Endothelial cell of umbilical vein (primary cell): ENCODE measurements at regions of chr11 and their contacts with region 1.

Region 1: GRCh38 chr11:64304316-64305072 is 830 bp upstream of the ESRRA start:
- DNase-seq: peak; percentile 85
- H3K4me3 ChIP-seq: peak overlapping the region; percentile 14 to 57 (median 39)
- H3K27ac ChIP-seq: peak overlapping the region; percentile 49
- H3K4me1 ChIP-seq: peaks cover 21% of the 10 kb centered on the region
- H3K27me3 ChIP-seq: peaks cover 4 to 11% of the 10 kb centered on the region in 2 experiments
- CTCF ChIP-seq: peak; percentile 91 to 92
- POLR2A ChIP-seq: peak; percentile 35

Region 2: GRCh38 chr11:63838678-63839507 is 465.6 kb before region 1 on chr11 and contains the start of gene MARK2:
- CTCF ChIA-PET with region 1: no interaction called
- POLR2A ChIA-PET with region 1: no interaction called
- dilution Hi-C with region 1: no loop called
- intact Hi-C with region 1: loop called (anchors 5 kb)
- DNase-seq: peak; percentile 96
- H3K4me3 ChIP-seq: peak within 1 kb of the TSS; percentile 70 to 87 (median 85)
- H3K27ac ChIP-seq: peak within 1 kb of the TSS; percentile 61
- H3K4me1 ChIP-seq: peaks cover 26% of the 10 kb centered on the region
- H3K27me3 ChIP-seq: no peaks in the 10 kb centered on the region
- CTCF ChIP-seq: no peak
- POLR2A ChIP-seq: peak; percentile 72
- total RNA-seq, gene MARK2: 33.4 and 34.7 TPM in 2 replicates

Region 3: GRCh38 chr11:64204464-64204989 is 100.0 kb before region 1 on chr11:
- CTCF ChIA-PET with region 1: interaction called, 413 read pairs
- POLR2A ChIA-PET with region 1: interaction called, 5 read pairs
- dilution Hi-C with region 1: no loop called
- intact Hi-C with region 1: loop called (anchors 1 kb)
- DNase-seq: peak; percentile 90
- H3K4me3 ChIP-seq: no peak overlapping the region
- H3K27ac ChIP-seq: no peak overlapping the region
- H3K4me1 ChIP-seq: peaks cover 34% of the 10 kb centered on the region
- H3K27me3 ChIP-seq: no peaks in the 10 kb centered on the region
- CTCF ChIP-seq: peak; percentile 82 to 84
- POLR2A ChIP-seq: peak; percentile 27

Region 4: GRCh38 chr11:64240394-64241174 is 63.9 kb before region 1 on chr11 and contains the start of gene FKBP2:
- CTCF ChIA-PET with region 1: interaction called, 36 read pairs
- POLR2A ChIA-PET with region 1: interaction called, 3 read pairs
- dilution Hi-C with region 1: no loop called
- intact Hi-C with region 1: loop called (anchors 1 kb)
- DNase-seq: peak; percentile 97
- H3K4me3 ChIP-seq: peak within 1 kb of the TSS; percentile 67 to 93 (median 67)
- H3K27ac ChIP-seq: peak within 1 kb of the TSS; percentile 88
- H3K4me1 ChIP-seq: peaks cover 15% of the 10 kb centered on the region
- H3K27me3 ChIP-seq: no peaks in the 10 kb centered on the region
- CTCF ChIP-seq: no peak
- POLR2A ChIP-seq: peak; percentile 1
- total RNA-seq, gene FKBP2: 48.4 and 48.5 TPM in 2 replicates

Region 5: GRCh38 chr11:64269380-64270234 is 34.9 kb before region 1 on chr11:
- CTCF ChIA-PET with region 1: interaction called, 76 read pairs
- POLR2A ChIA-PET with region 1: no interaction called
- dilution Hi-C with region 1: no loop called
- intact Hi-C with region 1: loop called (anchors 1 kb)
- DNase-seq: peak; percentile 100
- H3K4me3 ChIP-seq: peak overlapping the region; percentile 1 to 66 (median 58)
- H3K27ac ChIP-seq: peak overlapping the region; percentile 76
- H3K4me1 ChIP-seq: peaks cover 38% of the 10 kb centered on the region
- H3K27me3 ChIP-seq: no peaks in the 10 kb centered on the region
- CTCF ChIP-seq: no peak
- POLR2A ChIP-seq: peak; percentile 73

Region 6: DNA sequence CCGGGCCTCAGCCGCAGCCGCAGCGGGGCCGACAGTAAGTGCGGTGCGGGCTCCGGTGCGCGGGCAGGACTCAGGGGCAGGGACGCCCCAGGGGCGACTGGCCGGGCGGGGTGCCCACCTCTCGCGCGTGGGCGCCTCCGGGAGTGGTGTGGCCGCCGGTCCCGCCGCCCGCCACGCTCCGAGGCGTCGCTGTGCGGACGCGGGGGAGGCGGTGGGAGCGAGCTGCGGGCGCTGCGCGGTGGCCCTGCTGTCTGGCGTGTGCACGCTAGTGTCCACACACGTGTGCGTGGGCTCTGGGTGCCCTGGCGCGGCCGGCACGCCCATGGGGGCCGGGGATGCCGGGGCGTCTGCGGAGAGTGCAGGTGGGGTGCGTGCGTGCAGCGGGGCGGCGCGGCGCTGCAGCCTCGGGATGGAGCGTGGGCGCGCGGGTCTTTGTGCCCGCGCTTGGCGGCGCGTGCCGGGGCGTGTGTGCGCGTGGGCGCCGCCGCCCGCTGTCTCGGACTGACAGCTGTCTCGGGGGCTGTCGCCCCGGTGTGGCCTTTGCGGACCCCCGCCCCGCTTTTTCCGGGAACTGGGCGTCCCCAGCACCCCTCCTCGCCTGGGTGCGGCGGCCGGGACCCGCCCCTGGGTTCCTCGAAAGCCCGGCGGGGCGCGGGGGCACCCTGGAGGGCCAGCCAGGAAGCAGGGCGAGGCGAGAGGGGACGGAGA is 12.6 kb before region 1 on chr11:
- CTCF ChIA-PET with region 1: interaction called, 23 read pairs
- POLR2A ChIA-PET with region 1: no interaction called
- dilution Hi-C with region 1: no loop called
- intact Hi-C with region 1: no loop called
- DNase-seq: no peak
- H3K4me3 ChIP-seq: no peak overlapping the region
- H3K27ac ChIP-seq: no peak overlapping the region
- H3K4me1 ChIP-seq: no peaks in the 10 kb centered on the region
- H3K27me3 ChIP-seq: peaks cover 49 to 61% of the 10 kb centered on the region in 2 experiments
- CTCF ChIP-seq: no peak
- POLR2A ChIP-seq: no peak

Region 7: GRCh38 chr11:64358907-64359711 is 54.6 kb after region 1 on chr11 and contains the start of gene RPS6KA4:
- CTCF ChIA-PET with region 1: interaction called, 52 read pairs
- POLR2A ChIA-PET with region 1: no interaction called
- dilution Hi-C with region 1: no loop called
- intact Hi-C with region 1: loop called (anchors 1 kb)
- DNase-seq: peak; percentile 60
- H3K4me3 ChIP-seq: peak within 1 kb of the TSS; percentile 11 to 91 (median 33)
- H3K27ac ChIP-seq: peak within 1 kb of the TSS; percentile 70
- H3K4me1 ChIP-seq: peaks cover 22% of the 10 kb centered on the region
- H3K27me3 ChIP-seq: no peaks in the 10 kb centered on the region
- CTCF ChIP-seq: no peak
- POLR2A ChIP-seq: peak; percentile 92
- total RNA-seq, gene RPS6KA4: 41.8 and 44.1 TPM in 2 replicates